ENCODE measurements at regions of chr1 and their contacts with region 1.

Region 1: GRCh38 chr1:231240883-231241735 is at the start of gene GNPAT:
- DNase-seq: peak; percentile 83
- H3K4me3 ChIP-seq: peak within 1 kb of the TSS; percentile 83 to 99 (median 86)
- H3K27ac ChIP-seq: peak within 1 kb of the TSS; percentile 73
- H3K4me1 ChIP-seq: peaks cover 13% of the 10 kb centered on the region
- H3K27me3 ChIP-seq: no peaks in the 10 kb centered on the region
- CTCF ChIP-seq: no peak
- total RNA-seq, gene GNPAT: 29.5 to 52.2 TPM

Region 2: DNA sequence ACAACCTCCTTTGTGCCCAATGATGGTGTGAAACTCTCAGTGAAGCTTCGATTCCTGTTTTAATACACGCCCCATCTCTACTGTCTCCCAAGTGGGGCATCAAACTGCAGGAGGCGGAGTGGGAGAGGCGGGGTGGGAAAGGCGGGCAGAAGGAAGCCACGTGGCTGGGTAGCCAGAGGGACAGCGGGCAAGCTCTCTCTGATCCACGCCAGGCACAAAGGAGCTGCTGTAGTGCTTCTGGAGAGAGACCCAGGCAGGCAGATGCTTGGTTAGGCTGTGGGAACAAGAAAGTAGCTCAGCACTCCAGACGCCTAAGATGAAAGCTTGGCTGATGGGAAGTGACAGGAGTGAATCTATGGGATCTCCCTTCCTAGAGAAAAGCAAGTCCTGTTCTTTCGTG is 53.5 kb before region 1 on chr1:
- CTCF ChIA-PET with region 1: no interaction called
- dilution Hi-C with region 1: no loop called
- in situ Hi-C with region 1: no loop called
- intact Hi-C with region 1: no loop called
- DNase-seq: no peak
- H3K4me3 ChIP-seq: no peak overlapping the region
- H3K27ac ChIP-seq: no peak overlapping the region
- H3K4me1 ChIP-seq: no peaks in the 10 kb centered on the region
- H3K27me3 ChIP-seq: peaks cover 10% of the 10 kb centered on the region
- CTCF ChIP-seq: no peak

Region 3: GRCh38 chr1:231337472-231338269 is 96.6 kb after region 1 on chr1 and contains the start of gene EXOC8:
- CTCF ChIA-PET with region 1: interaction called, 3 read pairs
- dilution Hi-C with region 1: no loop called
- in situ Hi-C with region 1: no loop called
- intact Hi-C with region 1: loop called (anchors 1 kb)
- DNase-seq: peak; percentile 97
- H3K4me3 ChIP-seq: peak within 1 kb of the TSS; percentile 62 to 99 (median 88)
- H3K27ac ChIP-seq: peak within 1 kb of the TSS; percentile 97
- H3K4me1 ChIP-seq: peaks cover 28% of the 10 kb centered on the region
- H3K27me3 ChIP-seq: no peaks in the 10 kb centered on the region
- CTCF ChIP-seq: no peak
- total RNA-seq, gene EXOC8: 12.7 to 16.5 TPM

Measured in mammary epithelial cell (primary cell).